Psoas muscle (tissue), 8 donors: ENCODE measurements at regions of chr7 and their contacts with region 1.

Region 1: DNA sequence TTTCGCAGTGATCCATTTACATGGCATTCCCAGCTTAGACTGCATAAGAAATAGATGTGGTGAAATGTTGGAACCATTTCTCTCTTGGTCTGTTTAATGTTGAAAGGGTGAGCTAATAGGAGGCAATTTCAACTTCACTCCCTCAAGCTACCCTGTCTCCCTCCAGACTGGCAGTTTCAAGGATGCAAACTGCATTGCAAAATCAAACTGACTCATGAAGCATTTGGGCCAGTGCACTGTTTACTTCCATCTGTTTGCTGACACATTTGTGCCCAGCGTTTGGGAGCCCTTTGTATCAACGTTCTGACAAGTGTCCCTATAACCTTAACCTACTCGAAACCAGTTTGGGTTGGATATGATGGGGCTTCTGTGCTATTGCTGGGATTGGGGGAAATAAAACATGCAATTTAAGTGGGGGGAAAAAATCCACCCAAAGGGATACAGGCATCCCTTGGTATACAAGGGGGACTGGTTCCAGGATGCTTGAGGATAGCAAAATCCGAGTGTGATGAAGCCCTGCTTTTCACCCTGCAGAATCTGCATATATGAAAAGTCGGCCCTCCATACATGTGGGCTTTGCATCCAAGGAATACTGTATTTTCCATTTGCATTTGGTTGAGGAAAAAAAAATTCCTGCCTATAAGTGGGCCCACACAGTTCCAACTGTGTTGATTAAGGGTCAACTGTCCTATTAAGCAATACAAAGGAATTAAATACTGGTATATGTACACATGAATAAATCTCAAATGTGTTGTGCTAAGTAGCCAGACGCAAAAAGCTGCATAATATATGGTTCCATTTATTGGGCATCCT is 15.6 kb downstream of the RHEB start:
- DNase-seq: peak in 1 of 2 donors; percentile 32
- ATAC-seq: peak; percentile 86 to 96 (median 90)
- H3K4me3 ChIP-seq: no peak overlapping the region
- H3K27ac ChIP-seq: peak overlapping the region; percentile 79
- H3K4me1 ChIP-seq: peaks cover 80% of the 10 kb centered on the region
- H3K27me3 ChIP-seq: no peaks in the 10 kb centered on the region
- CTCF ChIP-seq: no peak

Region 2: DNA sequence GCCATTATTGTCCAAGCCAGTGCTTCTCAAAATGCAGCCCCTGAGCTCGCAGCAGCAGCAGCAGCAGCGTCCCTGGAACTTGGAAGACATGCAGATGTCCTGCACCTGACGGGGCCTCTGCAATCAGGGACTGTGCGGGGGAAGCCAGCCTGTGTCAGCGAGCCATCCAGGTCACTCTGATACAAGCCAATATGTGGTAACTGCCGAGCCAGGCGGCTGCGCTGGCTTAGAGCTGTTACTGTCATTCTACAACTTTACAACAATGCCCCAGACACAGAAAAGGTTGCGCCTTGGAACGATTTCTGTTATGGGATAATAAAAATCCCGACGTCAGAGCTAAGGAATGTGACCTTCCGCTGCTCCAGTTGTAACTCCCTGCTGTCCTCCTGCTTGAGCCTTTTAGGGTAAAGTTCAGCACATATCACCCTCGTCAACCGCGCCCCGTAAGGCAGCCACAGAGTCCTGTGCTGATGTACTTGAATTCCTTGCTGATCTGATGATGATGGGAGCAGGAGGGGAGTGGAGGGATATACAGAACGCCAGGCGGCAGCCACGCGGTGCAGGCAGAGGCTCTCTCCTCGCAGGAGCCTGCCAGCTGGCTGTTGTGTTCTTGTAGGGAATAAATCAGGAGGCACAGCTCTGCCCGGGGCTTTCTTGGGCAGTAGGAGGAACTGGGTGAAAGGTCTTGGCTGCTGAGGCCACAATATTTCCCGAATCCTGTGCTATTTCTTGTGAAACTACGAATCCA is 44.2 kb before region 1 on chr7:
- intact Hi-C with region 1: loop called (anchors 5 kb)
- DNase-seq: peak; percentile 84 to 90
- ATAC-seq: peak; percentile 84 to 85 (median 84)
- H3K4me3 ChIP-seq: peak overlapping the region; percentile 42
- H3K27ac ChIP-seq: peak overlapping the region; percentile 91
- H3K4me1 ChIP-seq: peaks cover 25% of the 10 kb centered on the region
- H3K27me3 ChIP-seq: no peaks in the 10 kb centered on the region
- CTCF ChIP-seq: no peak

Region 3: DNA sequence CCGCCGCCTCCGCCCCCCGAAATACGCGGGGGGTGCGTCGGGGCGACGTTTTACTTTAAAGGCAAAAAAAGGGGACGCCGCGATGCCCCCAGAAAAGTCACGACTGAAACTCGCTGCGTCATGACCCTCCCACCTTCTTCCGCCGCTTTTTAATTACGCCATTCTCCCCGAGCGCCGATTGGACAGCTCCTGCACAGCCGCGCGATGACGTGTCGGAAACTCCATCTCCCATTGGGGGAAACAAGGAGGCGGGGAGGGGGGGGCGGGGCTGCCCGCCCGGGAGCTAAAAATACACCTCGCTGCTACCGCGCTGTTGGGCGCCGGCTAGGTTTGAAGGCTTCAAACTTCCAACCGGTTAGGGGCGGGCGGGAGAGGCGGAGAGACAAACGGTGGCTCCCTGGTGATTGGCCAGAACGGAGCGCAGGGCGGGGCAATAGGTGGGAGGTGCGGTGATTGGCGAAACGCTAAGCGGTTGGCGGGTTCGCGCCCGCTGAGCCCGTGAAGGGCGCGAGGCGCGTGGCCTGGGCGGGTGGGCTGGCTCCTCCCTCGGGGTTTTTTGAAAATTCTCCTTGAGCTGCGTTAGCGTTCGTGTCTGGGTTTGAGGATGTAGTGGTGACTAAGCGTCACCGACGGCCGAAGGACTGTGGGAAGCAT is 15.8 kb after region 1 on chr7 and contains the start of gene RHEB:
- intact Hi-C with region 1: no loop called
- DNase-seq: peak; percentile 99
- ATAC-seq: peak; percentile 90 to 93 (median 91)
- H3K4me3 ChIP-seq: peak within 1 kb of the TSS; percentile 85
- H3K27ac ChIP-seq: peak within 1 kb of the TSS; percentile 99
- H3K4me1 ChIP-seq: peaks cover 20% of the 10 kb centered on the region
- H3K27me3 ChIP-seq: no peaks in the 10 kb centered on the region
- CTCF ChIP-seq: no peak
- total RNA-seq, gene RHEB: 98.0 to 191 (median 142) TPM

Region 4: DNA sequence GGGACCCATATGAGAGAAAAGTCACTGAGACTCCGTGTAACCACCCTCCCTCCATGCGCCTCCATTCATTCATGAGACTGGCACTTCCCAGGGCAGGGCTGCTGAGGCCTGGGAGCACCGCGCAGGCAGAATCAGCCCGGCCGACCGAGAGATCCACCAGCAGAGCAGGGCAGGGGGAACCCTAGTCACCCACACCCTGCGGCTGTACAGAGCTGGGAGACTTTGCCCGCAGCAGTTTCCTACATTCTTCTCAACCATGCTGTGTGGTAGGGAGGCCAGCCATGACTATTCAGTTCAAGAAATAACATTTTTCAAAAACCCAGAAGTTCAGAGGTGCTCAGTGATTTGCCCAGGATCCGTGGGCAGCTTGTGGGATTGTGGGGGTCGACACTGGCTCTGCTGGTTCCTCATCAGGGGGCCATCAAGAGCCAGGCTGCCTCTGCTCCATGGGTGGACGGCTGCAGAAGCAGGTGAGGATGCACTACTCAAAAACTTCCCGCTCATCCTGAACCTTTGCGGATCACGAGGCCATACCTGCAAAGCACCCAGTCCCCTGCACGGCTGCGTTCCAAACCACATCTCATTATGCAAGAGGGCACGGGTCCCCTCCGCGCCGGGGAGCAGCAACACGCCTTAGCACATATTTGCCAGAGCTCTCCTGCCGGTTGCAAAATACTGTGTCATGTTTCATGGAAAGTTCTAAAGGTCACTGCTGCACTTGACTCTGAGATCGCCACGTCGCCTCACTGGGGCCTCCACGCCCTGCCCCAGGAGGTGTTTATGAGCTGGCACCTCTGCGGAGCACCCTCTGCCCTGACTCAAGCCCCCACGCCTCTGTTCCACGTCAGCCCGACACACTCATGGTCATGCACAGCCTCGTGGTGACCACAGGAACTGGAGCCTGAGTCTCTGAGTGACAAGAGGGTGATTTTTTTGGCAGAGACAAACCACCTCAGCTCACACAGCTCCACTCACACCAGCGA is 240.8 kb after region 1 on chr7:
- intact Hi-C with region 1: no loop called
- DNase-seq: peak; percentile 84 to 96
- ATAC-seq: peak; percentile 92 to 96 (median 95)
- H3K4me3 ChIP-seq: peak overlapping the region; percentile 42
- H3K27ac ChIP-seq: peak overlapping the region; percentile 59
- H3K4me1 ChIP-seq: peaks cover 38% of the 10 kb centered on the region
- H3K27me3 ChIP-seq: peaks cover 0 to 1% (median 0%) of the 10 kb centered on the region in 3 donors
- CTCF ChIP-seq: peak; percentile 37